Activated CD8-positive, alpha-beta memory T cell treated with anti-CD3 and anti-CD28 coated beads, Interleukin-2, amount 10 ng/mL, durations not matched to agents 7 days and 5 days (primary cell): ENCODE measurements at regions of chr3 and their contacts with region 1.

Region 1: DNA sequence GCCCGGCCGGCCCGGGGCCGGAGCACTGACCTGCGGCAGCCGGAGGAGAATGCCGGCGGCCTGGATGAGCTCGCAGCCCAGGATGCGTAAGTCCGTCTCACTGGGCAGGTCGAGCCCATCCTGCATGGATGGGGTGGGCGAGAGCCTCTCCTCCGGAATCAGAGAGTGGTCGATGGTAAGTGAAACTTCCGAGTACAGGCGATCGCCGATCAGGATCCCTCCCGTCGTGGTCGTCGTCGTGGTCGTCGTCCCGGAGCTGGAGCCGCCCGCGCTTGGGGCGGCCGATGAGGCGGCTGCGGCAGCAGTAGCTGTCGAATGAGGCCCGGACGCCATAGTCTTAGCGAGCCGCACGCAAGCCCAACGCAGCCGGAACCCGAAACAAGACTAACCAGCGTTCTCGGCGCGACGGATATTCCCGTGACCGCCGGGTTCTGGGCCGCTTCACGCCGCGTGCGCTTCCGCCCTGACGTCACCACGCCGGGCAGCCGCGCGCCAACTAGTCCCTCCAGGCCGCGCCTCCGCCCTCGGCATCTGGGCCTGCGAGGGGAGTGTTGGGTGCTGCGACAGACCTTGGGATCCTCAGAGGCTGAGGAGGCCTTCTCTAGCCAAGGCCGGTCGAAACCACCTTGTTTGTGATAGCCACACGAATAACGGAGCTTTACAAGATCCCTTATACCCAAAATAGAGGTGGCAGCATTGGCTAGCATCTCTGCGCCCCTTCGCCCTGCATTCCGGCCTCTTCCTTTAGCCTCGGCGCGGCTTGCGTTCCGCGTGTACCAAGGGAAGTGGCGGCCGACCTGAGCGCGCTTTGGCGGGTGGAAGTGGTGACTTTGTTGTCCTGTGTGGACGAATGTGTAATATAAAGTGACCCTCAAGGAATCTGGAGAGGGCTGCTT is at the start of gene CCNL1:
- DNase-seq: peak; percentile 96
- ATAC-seq: peak; percentile 80
- H3K4me3 Mint-ChIP-seq: peak within 1 kb of the TSS; percentile 94
- H3K27ac Mint-ChIP-seq: peak within 1 kb of the TSS; percentile 98
- H3K4me1 Mint-ChIP-seq: peaks cover 42% of the 10 kb centered on the region
- H3K27me3 Mint-ChIP-seq: no peaks in the 10 kb centered on the region
- total RNA-seq, gene CCNL1: 166 to 254 TPM

Region 2: DNA sequence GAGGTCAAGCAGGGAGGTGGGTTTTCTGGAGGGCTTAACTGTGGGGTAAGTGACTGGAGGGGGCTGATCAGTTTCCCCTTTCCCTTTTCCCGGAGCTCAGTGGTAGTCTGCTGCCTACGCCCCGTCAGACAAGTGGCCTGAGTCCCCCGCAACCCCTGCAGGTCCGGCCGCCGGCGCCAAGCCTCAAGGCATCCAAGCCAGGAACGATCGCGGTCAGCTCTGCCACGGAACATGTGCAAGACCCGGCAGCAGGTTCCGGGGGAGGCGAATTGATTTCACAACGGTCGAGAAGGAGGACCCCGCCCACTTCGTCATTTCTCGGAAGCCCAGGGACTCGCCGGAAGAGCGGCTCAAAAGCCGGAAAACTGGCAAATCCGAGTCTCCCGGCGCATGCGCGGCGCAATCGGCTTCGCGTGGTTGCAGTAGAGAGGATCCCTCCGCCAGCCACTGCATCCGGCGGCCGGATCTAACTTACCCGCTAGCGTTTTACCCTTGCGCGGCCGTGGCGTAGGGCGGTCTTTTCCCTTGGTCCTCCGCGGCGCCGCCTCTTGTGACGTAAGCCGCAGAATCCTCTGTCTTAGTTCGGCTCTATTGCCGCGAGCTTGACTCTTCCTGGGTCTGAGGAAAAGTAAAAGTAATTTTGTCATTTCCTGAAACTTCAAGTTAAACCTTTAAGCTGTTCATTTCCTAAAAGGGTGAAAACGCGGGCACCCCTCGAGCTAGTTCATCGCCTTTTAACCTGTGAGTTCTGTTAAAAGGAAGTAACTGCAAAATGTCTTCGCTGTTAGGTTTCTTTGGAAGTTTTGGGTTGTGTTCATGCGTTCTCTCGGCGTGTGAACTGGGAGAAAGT is 14.9 kb after region 1 on chr3:
- CTCF ChIA-PET with region 1: interaction called, 86 read pairs
- DNase-seq: peak; percentile 99
- ATAC-seq: peak; percentile 95
- H3K4me3 Mint-ChIP-seq: peak overlapping the region; percentile 95
- H3K27ac Mint-ChIP-seq: peak overlapping the region; percentile 97
- H3K4me1 Mint-ChIP-seq: peaks cover 20% of the 10 kb centered on the region
- H3K27me3 Mint-ChIP-seq: no peaks in the 10 kb centered on the region

Region 3: DNA sequence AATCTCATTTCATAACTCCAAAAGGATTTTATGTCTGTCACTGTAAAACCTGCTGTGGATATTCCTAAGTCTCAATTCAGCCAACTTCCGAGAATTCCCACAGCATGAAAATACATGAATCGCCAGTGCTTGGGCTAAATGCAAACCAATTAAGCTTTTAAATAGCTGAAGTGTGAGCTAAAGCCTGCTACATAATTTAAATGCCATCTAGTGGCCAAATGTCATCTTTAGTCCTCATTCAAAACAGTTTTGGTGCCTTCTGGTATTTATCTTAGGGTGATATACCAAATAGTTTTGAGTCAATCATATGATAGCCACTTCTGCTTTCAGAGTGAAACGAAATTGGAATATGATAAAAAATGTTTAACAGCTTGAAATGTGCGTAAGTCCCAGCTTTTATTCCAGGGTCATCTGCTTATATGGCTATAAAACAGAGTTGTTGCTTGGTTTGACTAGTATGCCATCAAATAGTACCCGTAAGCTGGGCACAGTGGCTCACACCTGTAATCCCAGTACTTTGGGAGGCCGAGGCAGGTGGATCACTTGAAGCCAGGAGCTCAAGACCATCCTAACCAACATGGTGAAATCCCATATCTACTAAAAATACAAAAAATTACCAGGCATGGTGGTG is 41.8 kb after region 1 on chr3:
- CTCF ChIA-PET with region 1: interaction called, 10 read pairs
- DNase-seq: no peak
- ATAC-seq: peak; percentile 49
- H3K4me3 Mint-ChIP-seq: no peak overlapping the region
- H3K27ac Mint-ChIP-seq: no peak overlapping the region
- H3K4me1 Mint-ChIP-seq: no peaks in the 10 kb centered on the region
- H3K27me3 Mint-ChIP-seq: no peaks in the 10 kb centered on the region

Region 4: GRCh38 chr3:157271283-157271882 is 111.4 kb after region 1 on chr3:
- CTCF ChIA-PET with region 1: no interaction called
- DNase-seq: no peak
- ATAC-seq: no peak
- H3K4me3 Mint-ChIP-seq: no peak overlapping the region
- H3K27ac Mint-ChIP-seq: no peak overlapping the region
- H3K4me1 Mint-ChIP-seq: no peaks in the 10 kb centered on the region
- H3K27me3 Mint-ChIP-seq: peaks cover 4% of the 10 kb centered on the region